Activated CD4-positive, alpha-beta T cell treated with anti-CD3 and anti-CD28 coated beads for 36 hours (primary cell): ENCODE measurements at regions of chr15 and their contacts with region 1.

Region 1: GRCh38 chr15:73697033-73697467 is 12.9 kb downstream of the CD276 start:
- DNase-seq: peak; percentile 90
- ATAC-seq: peak; percentile 96
- H3K4me3 Mint-ChIP-seq: peak overlapping the region; percentile 39
- H3K27ac Mint-ChIP-seq: peak overlapping the region; percentile 56
- H3K4me1 Mint-ChIP-seq: peaks cover 25% of the 10 kb centered on the region
- H3K27me3 Mint-ChIP-seq: peaks cover 44% of the 10 kb centered on the region

Region 2: GRCh38 chr15:73051811-73052678 is 645.0 kb before region 1 on chr15 and contains the start of gene NEO1:
- CTCF ChIA-PET with region 1: no interaction called
- POLR2A ChIA-PET with region 1: no interaction called
- intact Hi-C with region 1: no loop called
- DNase-seq: peak; percentile 87
- ATAC-seq: peak; percentile 80
- H3K4me3 Mint-ChIP-seq: peak within 1 kb of the TSS; percentile 74
- H3K27ac Mint-ChIP-seq: peak within 1 kb of the TSS; percentile 53
- H3K4me1 Mint-ChIP-seq: peaks cover 6% of the 10 kb centered on the region
- H3K27me3 Mint-ChIP-seq: peaks cover 16% of the 10 kb centered on the region
- total RNA-seq, gene NEO1: 6.6 to 8.0 TPM

Region 3: GRCh38 chr15:73284090-73284716 is 412.8 kb before region 1 on chr15:
- CTCF ChIA-PET with region 1: interaction called, 5 read pairs
- POLR2A ChIA-PET with region 1: no interaction called
- intact Hi-C with region 1: loop called in 1 of 2 experiments (anchors 1 kb)
- DNase-seq: no peak
- ATAC-seq: no peak
- H3K4me3 Mint-ChIP-seq: no peak overlapping the region
- H3K27ac Mint-ChIP-seq: no peak overlapping the region
- H3K4me1 Mint-ChIP-seq: peaks cover 10% of the 10 kb centered on the region
- H3K27me3 Mint-ChIP-seq: no peaks in the 10 kb centered on the region

Region 4: DNA sequence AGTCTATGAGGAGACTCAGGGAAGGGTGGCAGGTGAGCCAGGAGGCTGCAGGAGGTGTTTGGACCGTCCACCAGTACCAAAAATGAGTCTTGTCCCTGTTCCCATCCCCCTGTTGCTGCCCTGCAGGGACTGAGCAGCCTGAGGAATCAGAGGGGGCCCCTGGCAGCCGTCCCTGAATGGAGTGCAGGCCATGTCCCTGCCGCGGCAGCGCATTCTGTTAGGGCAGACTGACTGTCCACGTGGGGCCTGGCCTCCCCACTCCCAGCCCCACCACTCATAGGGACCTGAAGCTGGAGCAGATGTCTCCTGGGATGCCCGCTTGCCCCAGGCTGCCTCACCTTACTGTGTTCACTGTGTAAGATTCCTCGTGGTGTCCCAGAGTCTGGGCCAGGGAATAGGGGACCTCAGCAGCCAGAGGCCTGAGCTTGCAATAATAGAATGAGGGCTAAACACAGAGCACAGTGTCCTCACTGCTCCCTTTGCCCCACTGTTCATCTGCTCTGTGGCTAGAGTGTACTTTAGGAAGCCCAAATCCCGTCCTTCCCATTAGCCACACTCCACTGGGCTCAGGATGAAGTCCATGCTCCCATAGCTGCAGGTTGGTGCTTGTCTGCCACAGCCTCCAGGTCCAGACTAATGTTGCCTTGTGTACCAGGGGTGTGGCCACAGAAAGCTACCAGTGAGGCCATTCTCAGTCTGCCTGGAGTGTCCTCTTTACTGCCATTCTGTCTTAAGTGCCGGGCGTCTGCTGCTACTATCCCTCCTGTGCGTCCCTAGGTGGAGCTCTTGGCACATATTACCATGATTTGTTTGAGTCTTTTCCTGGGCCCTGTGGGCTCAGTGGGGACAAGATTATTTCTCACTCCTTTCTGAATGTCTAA is 391.5 kb before region 1 on chr15:
- CTCF ChIA-PET with region 1: no interaction called
- POLR2A ChIA-PET with region 1: no interaction called
- intact Hi-C with region 1: loop called (anchors 2 to 10 kb)
- DNase-seq: peak; percentile 54
- ATAC-seq: peak; percentile 60
- H3K4me3 Mint-ChIP-seq: no peak overlapping the region
- H3K27ac Mint-ChIP-seq: no peak overlapping the region
- H3K4me1 Mint-ChIP-seq: no peaks in the 10 kb centered on the region
- H3K27me3 Mint-ChIP-seq: no peaks in the 10 kb centered on the region

Region 5: DNA sequence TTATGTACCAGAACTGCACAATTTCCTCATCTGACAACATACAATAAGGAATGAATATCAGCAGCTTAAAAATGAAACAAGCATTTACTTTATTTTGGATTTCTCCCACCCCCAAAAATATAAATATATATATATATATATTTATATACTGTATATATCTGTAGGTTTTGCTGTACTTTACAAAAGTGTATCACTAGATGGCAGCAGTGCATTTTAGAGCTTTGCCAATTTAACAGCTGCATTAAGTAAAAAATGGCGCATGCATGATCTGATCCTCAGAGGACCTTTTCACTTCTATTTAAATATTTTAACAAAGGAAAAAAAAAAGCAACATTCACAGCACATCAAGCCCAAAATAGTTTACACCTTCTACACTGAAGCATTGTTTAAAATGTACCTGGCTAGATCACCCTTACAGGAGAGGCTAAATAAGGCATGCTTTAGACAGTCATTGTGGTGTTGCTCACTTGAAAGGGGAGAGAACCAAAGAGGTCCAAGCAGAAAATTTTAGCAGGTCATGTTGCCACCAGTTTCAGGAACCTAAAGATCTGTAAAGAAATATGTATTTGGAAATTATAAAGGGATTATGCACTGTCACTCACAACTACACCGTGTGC is 136.4 kb before region 1 on chr15:
- CTCF ChIA-PET with region 1: interaction called, 16 read pairs
- POLR2A ChIA-PET with region 1: no interaction called
- intact Hi-C with region 1: loop called (anchors 1 kb)
- DNase-seq: no peak
- ATAC-seq: peak; percentile 53
- H3K4me3 Mint-ChIP-seq: no peak overlapping the region
- H3K27ac Mint-ChIP-seq: no peak overlapping the region
- H3K4me1 Mint-ChIP-seq: no peaks in the 10 kb centered on the region
- H3K27me3 Mint-ChIP-seq: no peaks in the 10 kb centered on the region

Region 6: DNA sequence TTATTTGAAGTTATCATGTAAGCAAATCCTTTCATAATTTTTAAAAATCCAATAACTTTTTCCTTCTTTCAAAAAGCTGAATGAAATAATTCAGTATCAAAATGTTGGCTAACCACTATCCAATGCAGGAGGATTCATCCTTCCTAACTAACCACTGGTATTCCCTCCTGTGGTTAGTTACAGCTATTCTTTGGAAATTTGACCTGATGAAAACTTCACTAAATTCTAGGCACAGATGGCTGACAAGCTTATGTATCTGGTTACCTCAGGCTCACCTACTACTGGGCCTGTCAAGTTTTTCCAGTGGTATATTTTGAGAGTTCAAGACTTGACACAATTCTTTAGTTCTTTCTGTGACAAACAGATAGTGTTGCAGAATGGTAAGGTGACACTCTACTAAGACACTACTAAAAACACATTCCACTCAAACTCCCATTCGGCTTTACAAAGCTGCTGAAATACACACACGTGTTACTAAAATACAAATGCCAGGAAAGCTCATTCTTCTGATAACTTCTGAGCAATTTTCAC is 79.7 kb before region 1 on chr15:
- CTCF ChIA-PET with region 1: interaction called, 10 read pairs
- POLR2A ChIA-PET with region 1: no interaction called
- intact Hi-C with region 1: no loop called
- DNase-seq: no peak
- ATAC-seq: no peak
- H3K4me3 Mint-ChIP-seq: no peak overlapping the region
- H3K27ac Mint-ChIP-seq: no peak overlapping the region
- H3K4me1 Mint-ChIP-seq: peaks cover 52% of the 10 kb centered on the region
- H3K27me3 Mint-ChIP-seq: no peaks in the 10 kb centered on the region

Region 7: GRCh38 chr15:73650416-73651126 is 46.5 kb before region 1 on chr15:
- CTCF ChIA-PET with region 1: interaction called, 4 read pairs
- POLR2A ChIA-PET with region 1: no interaction called
- intact Hi-C with region 1: loop called (anchors 1 kb)
- DNase-seq: peak; percentile 36
- ATAC-seq: peak; percentile 87
- H3K4me3 Mint-ChIP-seq: peak overlapping the region; percentile 10
- H3K27ac Mint-ChIP-seq: peak overlapping the region; percentile 69
- H3K4me1 Mint-ChIP-seq: peaks cover 18% of the 10 kb centered on the region
- H3K27me3 Mint-ChIP-seq: peaks cover 10% of the 10 kb centered on the region

Region 8: GRCh38 chr15:73677146-73677607 is 19.9 kb before region 1 on chr15:
- CTCF ChIA-PET with region 1: interaction called, 55 read pairs
- POLR2A ChIA-PET with region 1: no interaction called
- intact Hi-C with region 1: loop called (anchors 1 kb)
- DNase-seq: peak; percentile 68
- ATAC-seq: peak; percentile 49
- H3K4me3 Mint-ChIP-seq: no peak overlapping the region
- H3K27ac Mint-ChIP-seq: no peak overlapping the region
- H3K4me1 Mint-ChIP-seq: peaks cover 17% of the 10 kb centered on the region
- H3K27me3 Mint-ChIP-seq: peaks cover 33% of the 10 kb centered on the region

Region 9: DNA sequence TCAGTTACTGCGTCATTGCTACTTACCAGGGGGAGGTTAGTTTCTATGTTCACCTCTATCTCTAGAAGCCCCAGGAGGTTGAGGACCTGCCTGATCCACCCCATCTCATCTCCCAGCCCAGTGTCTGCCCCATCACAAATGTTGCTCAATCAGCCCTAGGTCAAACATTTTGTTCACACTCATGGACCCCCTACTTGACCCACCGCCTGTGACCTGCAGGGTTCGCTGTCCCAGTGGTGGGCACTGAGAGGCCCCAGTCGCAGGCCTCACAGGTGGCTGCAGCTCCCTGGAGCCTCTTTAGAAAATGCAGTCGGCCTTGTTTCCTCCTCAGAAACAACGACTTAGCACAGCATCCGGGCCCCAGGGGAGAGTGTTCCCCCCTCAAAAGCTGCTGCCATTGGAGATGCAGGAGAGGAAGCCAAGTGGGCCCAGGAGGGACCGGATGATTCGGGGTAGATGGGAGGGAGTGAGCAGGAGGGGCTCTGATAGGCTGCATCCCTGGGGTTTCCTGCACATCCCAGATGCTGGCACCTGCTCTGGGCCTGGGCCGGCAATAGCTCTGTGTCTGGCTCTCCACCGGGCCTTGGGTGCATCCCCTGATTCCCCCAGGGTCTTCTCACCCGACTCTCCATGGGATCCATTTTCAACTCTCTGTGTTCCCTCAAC is 74.5 kb after region 1 on chr15:
- CTCF ChIA-PET with region 1: no interaction called
- POLR2A ChIA-PET with region 1: no interaction called
- intact Hi-C with region 1: no loop called
- DNase-seq: no peak
- ATAC-seq: no peak
- H3K4me3 Mint-ChIP-seq: no peak overlapping the region
- H3K27ac Mint-ChIP-seq: no peak overlapping the region
- H3K4me1 Mint-ChIP-seq: no peaks in the 10 kb centered on the region
- H3K27me3 Mint-ChIP-seq: peaks cover 6% of the 10 kb centered on the region

Region 10: DNA sequence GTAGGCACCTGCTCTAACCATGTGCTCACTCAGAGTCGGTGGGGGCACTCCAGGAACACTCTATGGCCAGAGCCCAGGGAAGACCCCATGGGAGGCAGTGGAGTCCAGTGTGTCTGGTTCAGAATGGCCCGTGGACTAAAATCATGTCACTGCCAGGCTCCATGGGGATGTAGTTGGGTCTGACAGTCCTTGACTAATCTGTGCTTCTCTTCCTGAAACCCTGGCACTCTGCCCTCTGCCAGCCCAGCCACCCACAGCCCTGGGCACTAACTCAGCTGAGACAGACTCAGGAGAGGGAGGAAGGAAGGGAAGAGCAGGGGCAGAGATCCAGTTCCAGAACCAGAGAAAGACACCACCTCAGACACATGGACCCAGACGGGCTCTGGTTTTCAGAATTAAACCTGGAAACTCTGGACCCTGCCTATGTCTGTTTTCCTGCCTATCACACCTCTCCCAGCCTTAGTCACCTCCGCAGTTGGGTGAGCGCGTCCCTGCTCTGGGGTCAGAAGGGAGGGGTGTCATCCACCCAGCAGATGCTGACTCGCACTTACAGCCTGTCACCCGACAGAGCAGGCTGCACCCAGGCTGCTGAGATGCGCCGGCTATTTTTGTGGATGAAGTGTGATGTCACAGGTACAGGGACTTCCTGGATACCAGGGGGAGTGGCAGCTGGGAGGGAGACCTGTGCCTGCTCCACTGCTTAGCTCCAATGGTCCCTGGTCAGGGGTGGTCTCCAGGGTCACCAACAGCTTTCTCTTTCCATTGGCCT is 112.9 kb after region 1 on chr15:
- CTCF ChIA-PET with region 1: no interaction called
- POLR2A ChIA-PET with region 1: no interaction called
- intact Hi-C with region 1: no loop called
- DNase-seq: no peak
- ATAC-seq: no peak
- H3K4me3 Mint-ChIP-seq: no peak overlapping the region
- H3K27ac Mint-ChIP-seq: no peak overlapping the region
- H3K4me1 Mint-ChIP-seq: no peaks in the 10 kb centered on the region
- H3K27me3 Mint-ChIP-seq: peaks cover 3% of the 10 kb centered on the region

Region 11: DNA sequence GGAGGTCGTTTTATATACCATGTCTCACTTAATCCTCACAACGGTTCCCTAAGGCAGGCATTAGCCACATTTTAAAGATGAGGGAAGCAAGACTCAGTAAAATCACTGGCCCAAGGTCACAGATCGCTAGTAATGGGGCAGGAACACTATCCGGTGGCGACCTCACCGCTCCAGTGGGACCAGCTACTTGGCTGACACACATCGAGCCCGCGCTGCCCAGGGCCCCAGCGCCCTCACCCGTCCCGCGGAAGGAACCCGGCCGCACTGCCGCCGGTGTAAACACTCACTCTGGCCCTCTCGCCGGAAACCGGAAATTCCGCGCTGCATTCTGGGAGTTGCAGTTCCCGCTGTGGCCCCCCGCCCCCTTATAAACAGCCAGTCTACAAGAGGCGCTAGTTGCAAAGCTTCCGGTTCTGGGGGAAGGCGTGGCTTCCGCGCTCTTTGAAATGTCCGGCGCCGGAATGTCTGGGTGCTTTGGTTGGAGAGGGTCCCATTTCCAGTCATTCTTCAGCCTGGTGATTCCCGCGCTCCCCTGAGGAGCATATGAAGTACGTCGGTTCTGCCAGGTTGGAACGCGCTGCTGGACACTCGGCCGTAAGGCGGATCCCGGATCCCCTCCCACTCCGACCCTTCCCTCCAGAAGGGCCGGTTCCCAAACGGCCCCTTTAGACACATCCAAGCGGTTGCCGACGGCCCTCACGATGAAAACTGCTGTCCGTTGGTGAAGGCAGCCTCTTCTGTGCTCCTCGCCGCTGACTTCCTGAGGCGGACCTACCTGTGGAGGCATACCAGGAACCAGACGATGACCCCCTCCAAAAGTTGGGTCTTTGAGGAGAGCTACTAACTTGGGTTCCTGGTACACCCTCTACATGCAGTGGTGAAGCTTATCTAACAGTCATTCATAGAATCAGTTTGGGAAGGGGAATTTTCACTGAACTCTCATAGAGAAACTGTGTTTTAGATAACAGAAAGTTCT is 764.1 kb after region 1 on chr15 and contains the start of gene UBL7:
- CTCF ChIA-PET with region 1: no interaction called
- POLR2A ChIA-PET with region 1: no interaction called
- intact Hi-C with region 1: no loop called
- DNase-seq: peak; percentile 99
- ATAC-seq: peak; percentile 97
- H3K4me3 Mint-ChIP-seq: peak within 1 kb of the TSS; percentile 96
- H3K27ac Mint-ChIP-seq: peak within 1 kb of the TSS; percentile 97
- H3K4me1 Mint-ChIP-seq: peaks cover 47% of the 10 kb centered on the region
- H3K27me3 Mint-ChIP-seq: no peaks in the 10 kb centered on the region
- total RNA-seq, gene UBL7: 47.5 to 48.6 TPM